ENCODE measurements at regions of chr17 and their contacts with region 1.

Region 1: DNA sequence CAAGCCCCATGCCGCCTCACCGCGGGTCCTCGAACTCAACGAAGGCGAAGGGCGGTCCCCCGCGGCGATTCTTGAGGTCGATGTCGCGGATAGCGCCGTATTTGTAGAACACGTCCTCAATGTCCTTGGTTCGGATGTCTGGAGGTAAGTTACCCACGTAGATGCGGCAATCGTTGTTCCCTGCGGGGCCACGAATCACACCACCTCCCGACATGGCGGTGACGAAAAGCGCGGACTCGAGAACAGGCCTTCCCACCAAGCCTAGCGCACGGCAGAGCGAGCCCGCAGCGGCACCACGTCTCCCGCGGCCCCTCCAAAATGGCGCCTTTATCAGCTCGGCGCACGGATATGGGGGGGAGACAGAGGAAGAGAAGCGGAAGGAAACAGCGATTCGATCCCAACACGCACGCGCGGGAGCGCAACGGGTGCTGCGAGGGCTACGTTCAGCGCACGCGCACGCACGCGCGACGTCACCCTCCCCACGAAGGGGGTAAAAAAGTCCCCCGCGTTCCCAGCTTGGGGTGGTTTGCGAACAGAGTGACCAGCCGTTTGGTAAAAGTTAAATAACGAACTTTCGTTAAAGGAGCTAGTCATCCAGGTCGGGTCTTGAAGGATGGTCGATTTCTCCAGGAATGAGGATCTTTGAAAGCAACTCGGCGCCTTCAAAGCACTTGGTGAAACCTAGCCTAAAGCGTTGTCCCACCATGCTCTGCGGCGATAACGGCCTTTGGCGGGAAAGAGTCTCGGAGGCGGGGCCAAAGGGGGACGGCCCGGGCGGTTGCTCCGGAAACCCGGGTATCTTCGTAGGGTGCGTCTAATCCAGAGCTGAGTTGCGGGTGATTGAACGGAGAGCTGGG is at the start of gene SRSF1:
- ATAC-seq: peak; percentile 78 to 91 (median 88)
- H3K4me3 ChIP-seq: peak within 1 kb of the TSS; percentile 58 to 97 (median 82)
- H3K27ac ChIP-seq: peak within 1 kb of the TSS; percentile 99 to 100
- H3K4me1 ChIP-seq: peaks cover 24 to 27% of the 10 kb centered on the region in 2 donors
- total RNA-seq, gene SRSF1: 118 to 433 (median 192) TPM

Region 2: DNA sequence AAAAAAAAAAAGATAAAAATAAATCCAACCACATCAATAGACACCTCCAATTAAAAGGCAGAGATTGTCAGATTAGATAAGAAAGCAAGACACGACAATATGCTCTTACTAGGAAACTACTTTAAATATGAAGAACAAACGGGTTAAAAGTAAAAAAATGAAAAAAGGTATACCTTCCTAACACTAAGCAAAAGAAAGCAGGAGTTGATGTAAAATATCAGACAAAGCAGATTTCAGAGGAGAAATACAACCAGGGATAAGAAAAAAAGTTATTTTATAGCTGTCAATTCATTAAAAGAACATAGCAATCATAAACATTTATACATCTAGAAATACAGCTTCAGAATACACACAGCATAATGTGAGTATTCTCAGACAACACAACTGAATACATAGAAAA is 212.3 kb before region 1 on chr17:
- in situ Hi-C with region 1: no loop called
- ATAC-seq: no peak
- H3K4me3 ChIP-seq: no peak overlapping the region
- H3K27ac ChIP-seq: no peak overlapping the region
- H3K4me1 ChIP-seq: no peaks in the 10 kb centered on the region

Region 3: GRCh38 chr17:58096892-58097291 is 89.7 kb after region 1 on chr17:
- in situ Hi-C with region 1: loop called in 4 of 9 experiments (anchors 10 to 25 kb)
- ATAC-seq: peak in 1 of 8 experiments; percentile 12
- H3K4me3 ChIP-seq: no peak overlapping the region
- H3K27ac ChIP-seq: no peak overlapping the region
- H3K4me1 ChIP-seq: no peaks in the 10 kb centered on the region